ENCODE measurements at regions of chr14 and their contacts with region 1.

Region 1: GRCh38 chr14:88492272-88493089 is 62.3 kb downstream of the PTPN21 start:
- DNase-seq: peak in 1 of 2 donors; percentile 51
- ATAC-seq: peak; percentile 89
- H3K4me3 ChIP-seq: no peak overlapping the region
- H3K27ac ChIP-seq: no peak overlapping the region
- H3K4me1 ChIP-seq: no peaks in the 10 kb centered on the region
- H3K27me3 ChIP-seq: no peaks in the 10 kb centered on the region

Region 2: DNA sequence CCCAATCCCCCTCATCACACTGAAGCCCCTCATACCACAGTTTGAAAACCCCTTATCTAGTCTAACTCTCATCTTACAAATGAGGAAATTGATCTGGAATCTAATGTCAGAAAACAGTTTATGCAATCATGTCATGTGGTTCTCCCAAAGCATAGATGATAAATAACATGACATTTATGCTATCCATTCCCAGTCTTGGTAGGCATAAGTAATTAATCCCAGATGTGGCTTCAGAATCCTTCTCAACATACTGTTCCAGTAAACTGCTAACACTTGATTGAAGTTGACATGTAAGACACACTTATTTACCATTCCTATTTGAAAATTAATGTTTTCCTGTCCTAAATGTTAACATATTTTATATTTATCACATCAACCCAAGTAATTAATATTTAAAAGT is 668.2 kb before region 1 on chr14:
- intact Hi-C with region 1: no loop called
- DNase-seq: no peak
- ATAC-seq: no peak
- H3K4me3 ChIP-seq: no peak overlapping the region
- H3K27ac ChIP-seq: no peak overlapping the region
- H3K4me1 ChIP-seq: no peaks in the 10 kb centered on the region
- H3K27me3 ChIP-seq: no peaks in the 10 kb centered on the region

Region 3: GRCh38 chr14:88473816-88474215 is 18.7 kb before region 1 on chr14:
- intact Hi-C with region 1: no loop called
- DNase-seq: no peak
- ATAC-seq: no peak
- H3K4me3 ChIP-seq: no peak overlapping the region
- H3K27ac ChIP-seq: no peak overlapping the region
- H3K4me1 ChIP-seq: peaks cover 0 to 2% of the 10 kb centered on the region in 2 donors
- H3K27me3 ChIP-seq: no peaks in the 10 kb centered on the region

Region 4: GRCh38 chr14:88551094-88551870 is 58.8 kb after region 1 on chr14:
- intact Hi-C with region 1: loop called in 1 of 2 experiments (anchors 2 kb)
- DNase-seq: peak; percentile 84 to 92
- ATAC-seq: peak; percentile 92
- H3K4me3 ChIP-seq: peak overlapping the region; percentile 43 to 55
- H3K27ac ChIP-seq: no peak overlapping the region
- H3K4me1 ChIP-seq: peaks cover 0 to 4% of the 10 kb centered on the region in 2 donors
- H3K27me3 ChIP-seq: no peaks in the 10 kb centered on the region

Region 5: GRCh38 chr14:88562831-88563686 is 70.6 kb after region 1 on chr14 and contains the start of gene ZC3H14:
- intact Hi-C with region 1: loop called in 1 of 2 experiments (anchors 5 kb)
- DNase-seq: peak; percentile 89 to 94
- ATAC-seq: peak; percentile 98
- H3K4me3 ChIP-seq: peak within 1 kb of the TSS; percentile 82 to 86
- H3K27ac ChIP-seq: peak within 1 kb of the TSS in 1 of 2 donors; percentile 84
- H3K4me1 ChIP-seq: peaks cover 0 to 2% of the 10 kb centered on the region in 2 donors
- H3K27me3 ChIP-seq: no peaks in the 10 kb centered on the region
- total RNA-seq, gene ZC3H14: 46.7 to 55.1 TPM